ENCODE measurements at regions of chr3 and their contacts with region 1.

Region 1: DNA sequence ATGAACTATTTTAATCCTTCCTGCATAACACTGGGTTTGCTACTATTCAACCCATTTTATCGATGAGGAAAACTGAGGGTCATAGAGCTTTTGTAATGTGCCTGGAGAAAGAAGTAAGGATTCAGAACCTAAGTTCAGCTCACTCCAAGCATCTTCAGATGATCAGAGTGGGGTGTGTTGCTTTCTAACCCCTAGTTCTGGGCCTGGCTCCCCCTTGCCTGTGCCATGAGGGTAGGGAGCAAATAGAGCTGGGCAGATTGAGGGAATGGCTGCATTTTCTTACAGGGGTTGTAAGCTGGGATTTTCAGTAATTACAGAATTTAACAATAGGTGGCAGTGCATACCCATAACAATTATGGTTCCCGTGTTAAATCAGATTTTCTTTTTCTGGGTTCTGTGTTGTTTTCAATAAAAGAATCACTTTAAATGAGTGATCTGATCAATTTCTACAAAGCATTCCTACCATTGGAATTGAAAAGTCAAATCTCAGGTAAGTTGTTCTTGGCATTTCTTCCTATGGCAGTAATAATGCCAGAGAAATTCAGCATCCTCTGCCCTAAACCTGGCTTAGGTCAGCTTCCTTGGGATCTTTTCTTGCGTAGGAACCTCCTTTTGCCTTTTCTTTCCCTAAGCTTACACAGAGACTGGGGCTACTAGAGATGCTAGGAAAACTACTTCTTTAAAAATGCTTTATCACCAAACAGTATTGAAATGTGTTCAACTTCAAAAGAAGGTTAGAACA is 103.8 kb upstream of the IL12A start:
- DNase-seq: no peak
- H3K4me3 Mint-ChIP-seq: no peak overlapping the region
- H3K27ac Mint-ChIP-seq: no peak overlapping the region
- H3K4me1 Mint-ChIP-seq: no peaks in the 10 kb centered on the region
- H3K27me3 Mint-ChIP-seq: peaks cover 5% of the 10 kb centered on the region

Region 2: DNA sequence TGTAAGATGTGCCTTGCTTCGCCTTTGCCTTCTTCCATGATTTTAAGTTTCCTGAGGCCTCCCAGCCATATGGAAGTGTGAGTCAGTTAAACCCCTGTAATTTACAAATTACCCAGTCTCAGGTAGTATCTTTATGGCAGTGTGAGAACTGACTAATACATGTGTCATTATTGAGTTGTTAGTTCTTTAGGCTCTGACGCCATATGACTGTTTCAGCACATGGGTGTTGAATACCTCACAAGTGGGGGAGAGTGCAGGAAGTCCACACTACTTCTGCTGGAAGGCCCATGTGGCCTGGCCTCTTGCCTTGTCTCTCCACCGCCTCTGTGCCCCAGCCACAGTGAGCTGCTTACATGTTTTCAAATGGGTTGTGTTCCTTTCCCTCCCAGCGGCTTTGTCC is 1054.4 kb before region 1 on chr3:
- CTCF ChIA-PET with region 1: no interaction called
- intact Hi-C with region 1: no loop called
- DNase-seq: no peak
- H3K4me3 Mint-ChIP-seq: no peak overlapping the region
- H3K27ac Mint-ChIP-seq: no peak overlapping the region
- H3K4me1 Mint-ChIP-seq: peaks cover 3% of the 10 kb centered on the region
- H3K27me3 Mint-ChIP-seq: no peaks in the 10 kb centered on the region

Region 3: GRCh38 chr3:159565319-159565718 is 319.5 kb before region 1 on chr3:
- CTCF ChIA-PET with region 1: no interaction called
- intact Hi-C with region 1: no loop called
- DNase-seq: no peak
- H3K4me3 Mint-ChIP-seq: no peak overlapping the region
- H3K27ac Mint-ChIP-seq: no peak overlapping the region
- H3K4me1 Mint-ChIP-seq: no peaks in the 10 kb centered on the region
- H3K27me3 Mint-ChIP-seq: no peaks in the 10 kb centered on the region

Region 4: GRCh38 chr3:159866201-159866746 is 18.6 kb before region 1 on chr3:
- CTCF ChIA-PET with region 1: interaction called, 11 read pairs
- intact Hi-C with region 1: no loop called
- DNase-seq: no peak
- H3K4me3 Mint-ChIP-seq: no peak overlapping the region
- H3K27ac Mint-ChIP-seq: no peak overlapping the region
- H3K4me1 Mint-ChIP-seq: no peaks in the 10 kb centered on the region
- H3K27me3 Mint-ChIP-seq: peaks cover under 1% of the 10 kb centered on the region

Region 5: DNA sequence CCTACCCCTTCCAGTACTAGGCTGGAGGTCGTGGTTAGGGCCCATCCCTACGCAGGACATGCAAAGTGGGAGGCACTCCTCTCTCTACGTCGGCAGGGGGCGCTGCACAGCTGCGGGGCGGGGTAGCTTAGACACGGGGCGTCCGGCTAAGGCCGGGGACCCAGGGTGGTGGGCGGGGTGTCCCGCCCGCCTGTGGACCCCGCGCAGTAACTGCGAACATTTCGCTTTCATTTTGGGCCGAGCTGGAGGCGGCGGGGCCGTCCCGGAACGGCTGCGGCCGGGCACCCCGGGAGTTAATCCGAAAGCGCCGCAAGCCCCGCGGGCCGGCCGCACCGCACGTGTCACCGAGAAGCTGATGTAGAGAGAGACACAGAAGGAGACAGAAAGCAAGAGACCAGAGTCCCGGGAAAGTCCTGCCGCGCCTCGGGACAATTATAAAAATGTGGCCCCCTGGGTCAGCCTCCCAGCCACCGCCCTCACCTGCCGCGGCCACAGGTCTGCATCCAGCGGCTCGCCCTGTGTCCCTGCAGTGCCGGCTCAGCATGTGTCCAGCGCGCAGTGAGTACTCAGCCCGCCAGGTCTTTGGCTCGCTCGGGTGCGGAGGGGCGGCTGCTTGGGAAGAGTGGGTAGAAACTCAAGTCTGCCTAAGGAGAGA is 103.9 kb after region 1 on chr3 and contains the start of gene IL12A:
- CTCF ChIA-PET with region 1: interaction called, 23 read pairs
- intact Hi-C with region 1: no loop called
- DNase-seq: peak; percentile 85
- H3K4me3 Mint-ChIP-seq: peak within 1 kb of the TSS; percentile 57
- H3K27ac Mint-ChIP-seq: no peak within 1 kb of the TSS
- H3K4me1 Mint-ChIP-seq: peaks cover 14% of the 10 kb centered on the region
- H3K27me3 Mint-ChIP-seq: no peaks in the 10 kb centered on the region
- total RNA-seq, gene IL12A: not detected

Region 6: DNA sequence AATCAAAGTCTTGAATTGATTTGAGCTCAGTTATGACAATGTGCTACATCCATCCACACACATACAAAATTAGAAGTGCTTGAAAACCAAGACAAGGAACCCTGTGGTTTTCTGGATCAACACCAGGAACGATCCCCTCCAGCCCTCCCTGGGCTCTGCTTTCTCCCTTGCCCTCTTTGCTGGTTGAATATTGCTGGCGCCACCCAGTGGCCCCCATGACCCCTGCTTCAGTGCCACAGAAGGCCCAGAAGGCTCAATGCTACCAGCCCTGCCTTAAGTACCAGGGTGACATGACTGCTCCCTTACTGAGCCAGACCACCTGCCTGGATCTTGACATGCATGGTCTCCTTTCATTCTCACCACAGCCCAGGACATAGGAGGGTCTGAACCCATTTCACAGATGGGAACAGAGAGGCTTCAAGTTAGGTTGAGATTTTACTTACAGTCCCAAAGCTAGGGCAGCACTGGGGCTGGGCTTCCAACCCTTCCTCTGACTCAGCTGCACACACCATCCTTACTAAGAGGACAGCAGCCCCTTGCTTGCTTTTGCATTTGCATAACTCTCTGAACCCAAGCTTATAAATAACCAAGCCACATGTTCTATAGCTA is 118.8 kb after region 1 on chr3:
- CTCF ChIA-PET with region 1: interaction called, 87 read pairs
- intact Hi-C with region 1: loop called (anchors 1 kb)
- DNase-seq: peak; percentile 62
- H3K4me3 Mint-ChIP-seq: no peak overlapping the region
- H3K27ac Mint-ChIP-seq: no peak overlapping the region
- H3K4me1 Mint-ChIP-seq: no peaks in the 10 kb centered on the region
- H3K27me3 Mint-ChIP-seq: no peaks in the 10 kb centered on the region

Region 7: DNA sequence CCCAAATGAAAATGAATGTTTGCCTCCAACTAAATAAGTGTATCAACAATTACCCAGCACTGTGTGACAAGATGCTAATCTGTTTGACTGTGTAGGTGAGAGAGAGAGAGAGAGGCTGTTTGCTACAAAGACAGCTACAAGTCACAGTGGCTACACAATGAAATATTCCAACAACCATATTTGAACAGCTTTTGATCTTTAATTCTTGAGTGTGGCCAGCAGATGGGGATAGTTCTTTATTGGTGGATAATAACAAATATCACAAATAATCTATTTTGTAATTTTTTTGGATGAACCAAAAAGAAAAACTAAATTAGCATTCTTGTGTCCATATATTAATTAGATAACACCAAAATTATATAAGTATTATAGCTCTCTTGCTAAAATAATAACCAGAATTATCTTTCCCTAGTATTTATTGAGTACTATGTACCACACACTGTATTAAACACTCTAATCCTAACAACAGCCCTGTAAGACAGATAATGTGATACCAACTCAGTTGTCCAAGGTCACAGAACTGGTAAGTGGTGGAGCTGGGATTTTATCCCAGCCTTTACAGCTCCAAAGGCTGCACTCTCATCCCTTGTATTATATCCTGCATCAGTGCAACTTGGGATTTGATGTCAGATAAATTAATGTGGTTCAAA is 278.5 kb after region 1 on chr3:
- CTCF ChIA-PET with region 1: no interaction called
- intact Hi-C with region 1: loop called (anchors 10 kb)
- DNase-seq: no peak
- H3K4me3 Mint-ChIP-seq: no peak overlapping the region
- H3K27ac Mint-ChIP-seq: no peak overlapping the region
- H3K4me1 Mint-ChIP-seq: no peaks in the 10 kb centered on the region
- H3K27me3 Mint-ChIP-seq: no peaks in the 10 kb centered on the region

Region 8: GRCh38 chr3:160343132-160343531 is 458.3 kb after region 1 on chr3:
- CTCF ChIA-PET with region 1: no interaction called
- intact Hi-C with region 1: loop called (anchors 1 kb)
- DNase-seq: no peak
- H3K4me3 Mint-ChIP-seq: no peak overlapping the region
- H3K27ac Mint-ChIP-seq: no peak overlapping the region
- H3K4me1 Mint-ChIP-seq: no peaks in the 10 kb centered on the region
- H3K27me3 Mint-ChIP-seq: no peaks in the 10 kb centered on the region

Region 9: GRCh38 chr3:160486459-160486869 is 601.6 kb after region 1 on chr3:
- CTCF ChIA-PET with region 1: interaction called, 6 read pairs
- intact Hi-C with region 1: loop called (anchors 2 kb)
- DNase-seq: peak; percentile 14
- H3K4me3 Mint-ChIP-seq: no peak overlapping the region
- H3K27ac Mint-ChIP-seq: no peak overlapping the region
- H3K4me1 Mint-ChIP-seq: peaks cover 5% of the 10 kb centered on the region
- H3K27me3 Mint-ChIP-seq: peaks cover 7% of the 10 kb centered on the region

Region 10: DNA sequence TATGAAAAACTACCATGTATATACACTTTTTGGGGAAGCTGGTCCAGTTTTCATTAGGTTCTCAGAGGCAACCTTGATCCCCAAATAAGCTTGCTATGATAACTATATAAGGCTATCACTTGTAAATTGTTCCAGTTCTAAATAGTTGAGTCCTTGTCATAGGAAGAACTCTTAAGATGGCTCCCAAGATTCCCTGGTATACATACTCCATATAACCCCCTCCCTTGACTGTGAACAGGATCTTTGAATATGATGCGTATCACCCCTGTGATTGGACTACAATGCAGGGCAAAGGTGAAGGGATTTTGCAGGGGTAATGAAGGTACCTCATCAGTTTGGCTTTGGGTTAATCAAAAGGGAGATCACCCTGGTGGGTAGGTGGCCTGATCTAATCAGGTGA is 613.4 kb after region 1 on chr3:
- CTCF ChIA-PET with region 1: no interaction called
- intact Hi-C with region 1: no loop called
- DNase-seq: no peak
- H3K4me3 Mint-ChIP-seq: no peak overlapping the region
- H3K27ac Mint-ChIP-seq: no peak overlapping the region
- H3K4me1 Mint-ChIP-seq: no peaks in the 10 kb centered on the region
- H3K27me3 Mint-ChIP-seq: no peaks in the 10 kb centered on the region